ENCODE measurements at regions of chr7 and their contacts with region 1.

Region 1: DNA sequence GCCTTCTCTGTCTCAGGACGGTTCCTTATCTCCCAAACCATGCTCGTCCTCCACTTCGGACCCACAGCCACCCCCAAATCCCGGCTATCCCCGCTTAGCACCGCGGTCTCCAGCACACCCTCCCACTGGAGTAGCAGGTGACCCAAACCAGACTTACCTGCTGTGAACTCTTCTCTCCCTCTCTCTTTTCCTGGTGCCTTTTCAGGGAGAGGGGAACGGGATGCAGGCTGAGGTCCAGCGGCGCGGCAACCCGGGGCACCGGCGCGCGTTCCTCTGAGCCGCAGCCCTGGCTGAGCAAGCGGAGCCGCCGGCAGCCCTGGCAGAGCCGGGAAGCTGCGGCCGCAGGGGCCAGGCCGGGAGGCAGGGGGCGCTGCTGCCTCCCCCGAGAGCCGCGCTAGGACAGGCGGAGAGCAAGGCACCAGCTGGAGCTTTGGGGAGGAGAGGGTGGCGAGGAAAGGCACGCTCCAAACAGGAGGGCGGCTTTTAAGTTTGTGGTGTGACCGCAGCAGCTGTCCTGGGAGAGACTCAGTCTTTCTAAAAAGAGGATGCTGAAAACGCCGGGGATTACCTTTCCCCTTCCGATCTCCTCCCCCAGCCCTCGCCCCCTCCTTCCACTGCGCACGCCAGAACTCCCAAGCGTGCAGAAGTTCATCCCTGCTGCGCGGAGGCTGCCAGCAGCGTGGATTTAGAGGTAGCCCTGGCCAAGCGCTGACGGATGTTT is at the start of gene SEMA3D:
- DNase-seq: peak; percentile 81
- ATAC-seq: peak; percentile 89
- H3K4me3 ChIP-seq: peak within 1 kb of the TSS; percentile 59 to 87 (median 74)
- H3K4me3 Mint-ChIP-seq: peak within 1 kb of the TSS; percentile 80
- H3K27ac ChIP-seq: no peak within 1 kb of the TSS
- H3K27ac Mint-ChIP-seq: no peak within 1 kb of the TSS
- H3K4me1 ChIP-seq: peaks cover 12 to 22% of the 10 kb centered on the region in 2 donors
- H3K4me1 Mint-ChIP-seq: peaks cover 18% of the 10 kb centered on the region
- H3K27me3 ChIP-seq: peaks cover 0 to 25% (median 5%) of the 10 kb centered on the region in 4 experiments
- H3K27me3 Mint-ChIP-seq: peaks cover 44% of the 10 kb centered on the region
- CTCF ChIP-seq: peak; percentile 76
- total RNA-seq, gene SEMA3D: 0.36 and 0.59 TPM in 2 replicates

Region 2: DNA sequence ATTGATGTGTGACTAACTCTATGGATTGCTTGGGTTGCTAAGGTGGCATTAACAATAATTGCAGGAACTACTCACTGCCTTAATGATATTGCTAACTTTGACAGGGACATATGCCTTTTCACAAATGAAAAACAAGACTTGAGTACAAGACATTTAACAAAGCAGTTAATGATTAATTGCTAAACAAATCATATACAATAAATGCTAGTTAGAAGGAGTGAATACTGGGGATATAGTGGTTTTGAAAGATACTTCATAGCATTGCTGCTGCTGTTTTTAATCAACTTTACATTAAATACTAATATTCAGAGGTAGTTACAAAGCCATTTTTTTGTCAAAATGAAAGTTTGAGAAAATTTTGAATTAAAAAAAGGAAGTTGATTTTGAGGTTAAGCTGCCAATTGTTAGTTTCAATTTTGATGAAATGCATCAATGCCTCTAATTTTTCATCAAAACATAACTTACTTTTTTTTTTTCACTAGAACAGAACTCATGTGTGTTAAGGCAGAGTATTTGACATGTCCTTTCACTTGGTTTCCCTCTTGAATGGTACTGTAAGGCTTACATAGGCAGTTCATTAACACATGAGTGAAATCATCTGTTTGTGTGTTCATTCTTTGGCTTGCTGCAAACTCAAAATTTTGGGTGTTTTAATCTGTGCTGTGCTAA is 106.4 kb after region 1 on chr7:
- CTCF ChIA-PET with region 1: no interaction called
- POLR2A ChIA-PET with region 1: no interaction called
- intact Hi-C with region 1: loop called (anchors 10 kb)
- DNase-seq: peak; percentile 65
- ATAC-seq: peak; percentile 69
- H3K4me3 ChIP-seq: peak overlapping the region in 1 of 5 experiments; percentile 21
- H3K4me3 Mint-ChIP-seq: peak overlapping the region; percentile 78
- H3K27ac ChIP-seq: peak overlapping the region; percentile 52 to 72
- H3K27ac Mint-ChIP-seq: peak overlapping the region; percentile 93
- H3K4me1 ChIP-seq: peaks cover 43 to 61% of the 10 kb centered on the region in 2 donors
- H3K4me1 Mint-ChIP-seq: peaks cover 57% of the 10 kb centered on the region
- H3K27me3 ChIP-seq: no peaks in the 10 kb centered on the region
- H3K27me3 Mint-ChIP-seq: no peaks in the 10 kb centered on the region
- CTCF ChIP-seq: no peak

Region 3: GRCh38 chr7:85324145-85324799 is 137.6 kb after region 1 on chr7:
- CTCF ChIA-PET with region 1: interaction called, 11 read pairs
- POLR2A ChIA-PET with region 1: no interaction called
- intact Hi-C with region 1: loop called (anchors 1 kb)
- DNase-seq: peak; percentile 18
- ATAC-seq: no peak
- H3K4me3 ChIP-seq: no peak overlapping the region
- H3K4me3 Mint-ChIP-seq: no peak overlapping the region
- H3K27ac ChIP-seq: no peak overlapping the region
- H3K27ac Mint-ChIP-seq: no peak overlapping the region
- H3K4me1 ChIP-seq: no peaks in the 10 kb centered on the region
- H3K4me1 Mint-ChIP-seq: no peaks in the 10 kb centered on the region
- H3K27me3 ChIP-seq: no peaks in the 10 kb centered on the region
- H3K27me3 Mint-ChIP-seq: no peaks in the 10 kb centered on the region
- CTCF ChIP-seq: no peak

Region 4: DNA sequence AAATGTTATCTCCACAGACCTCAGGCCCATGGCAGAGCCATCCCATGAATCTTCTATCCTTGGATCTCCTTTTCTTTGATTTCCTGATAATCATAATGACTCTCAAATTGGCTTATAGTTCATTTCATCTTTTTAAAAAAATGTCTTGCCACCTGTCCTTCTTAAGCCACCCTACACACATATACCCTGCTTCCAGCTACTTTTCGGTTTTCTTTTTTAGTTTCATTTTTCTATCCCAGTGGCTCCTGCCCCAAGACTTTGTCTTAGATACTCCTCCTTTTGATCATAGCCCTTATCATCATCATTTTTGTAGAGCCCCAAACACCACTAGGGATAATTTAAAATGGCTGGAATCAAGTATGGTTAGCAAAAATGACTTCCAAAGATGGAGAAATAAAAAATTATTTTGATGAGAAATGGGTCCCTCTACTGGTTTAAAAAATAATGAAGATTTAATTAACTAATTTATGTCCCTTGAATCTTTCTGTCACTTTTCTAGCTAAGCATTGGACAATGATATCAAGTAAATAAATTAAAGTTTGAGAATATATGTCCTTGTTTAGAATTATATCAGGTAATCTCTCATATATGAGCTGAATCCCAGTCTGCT is 277.5 kb after region 1 on chr7:
- CTCF ChIA-PET with region 1: interaction called, 35 read pairs
- POLR2A ChIA-PET with region 1: no interaction called
- intact Hi-C with region 1: loop called (anchors 1 kb)
- DNase-seq: peak; percentile 15
- ATAC-seq: no peak
- H3K4me3 ChIP-seq: peak overlapping the region in 1 of 5 experiments; percentile 8
- H3K4me3 Mint-ChIP-seq: no peak overlapping the region
- H3K27ac ChIP-seq: no peak overlapping the region
- H3K27ac Mint-ChIP-seq: no peak overlapping the region
- H3K4me1 ChIP-seq: no peaks in the 10 kb centered on the region
- H3K4me1 Mint-ChIP-seq: no peaks in the 10 kb centered on the region
- H3K27me3 ChIP-seq: no peaks in the 10 kb centered on the region
- H3K27me3 Mint-ChIP-seq: no peaks in the 10 kb centered on the region
- CTCF ChIP-seq: peak; percentile 65

Region 5: GRCh38 chr7:85554236-85555178 is 367.8 kb after region 1 on chr7:
- CTCF ChIA-PET with region 1: interaction called, 23 read pairs
- POLR2A ChIA-PET with region 1: no interaction called
- intact Hi-C with region 1: loop called (anchors 1 kb)
- DNase-seq: peak; percentile 58
- ATAC-seq: peak; percentile 43
- H3K4me3 ChIP-seq: no peak overlapping the region
- H3K4me3 Mint-ChIP-seq: no peak overlapping the region
- H3K27ac ChIP-seq: no peak overlapping the region
- H3K27ac Mint-ChIP-seq: no peak overlapping the region
- H3K4me1 ChIP-seq: no peaks in the 10 kb centered on the region
- H3K4me1 Mint-ChIP-seq: no peaks in the 10 kb centered on the region
- H3K27me3 ChIP-seq: no peaks in the 10 kb centered on the region
- H3K27me3 Mint-ChIP-seq: no peaks in the 10 kb centered on the region
- CTCF ChIP-seq: peak; percentile 84

Measured in B cell (primary cell).